ENCODE measurements at regions of chr6 and their contacts with region 1.

Region 1: GRCh38 chr6:139515511-139515910 is 141.1 kb upstream of the CITED2 start:
- DNase-seq: no peak
- H3K4me3 ChIP-seq: no peak overlapping the region
- H3K27ac ChIP-seq: no peak overlapping the region
- H3K4me1 ChIP-seq: peaks cover 23% of the 10 kb centered on the region
- H3K27me3 ChIP-seq: no peaks in the 10 kb centered on the region
- CTCF ChIP-seq: no peak

Region 2: GRCh38 chr6:139433631-139434419 is 81.7 kb before region 1 on chr6:
- CTCF ChIA-PET with region 1: no interaction called
- POLR2A ChIA-PET with region 1: no interaction called
- intact Hi-C with region 1: loop called (anchors 10 kb)
- DNase-seq: peak in 1 of 2 experiments; percentile 89
- H3K4me3 ChIP-seq: no peak overlapping the region
- H3K27ac ChIP-seq: peak overlapping the region; percentile 33
- H3K4me1 ChIP-seq: peaks cover 53% of the 10 kb centered on the region
- H3K27me3 ChIP-seq: no peaks in the 10 kb centered on the region
- CTCF ChIP-seq: no peak

Region 3: DNA sequence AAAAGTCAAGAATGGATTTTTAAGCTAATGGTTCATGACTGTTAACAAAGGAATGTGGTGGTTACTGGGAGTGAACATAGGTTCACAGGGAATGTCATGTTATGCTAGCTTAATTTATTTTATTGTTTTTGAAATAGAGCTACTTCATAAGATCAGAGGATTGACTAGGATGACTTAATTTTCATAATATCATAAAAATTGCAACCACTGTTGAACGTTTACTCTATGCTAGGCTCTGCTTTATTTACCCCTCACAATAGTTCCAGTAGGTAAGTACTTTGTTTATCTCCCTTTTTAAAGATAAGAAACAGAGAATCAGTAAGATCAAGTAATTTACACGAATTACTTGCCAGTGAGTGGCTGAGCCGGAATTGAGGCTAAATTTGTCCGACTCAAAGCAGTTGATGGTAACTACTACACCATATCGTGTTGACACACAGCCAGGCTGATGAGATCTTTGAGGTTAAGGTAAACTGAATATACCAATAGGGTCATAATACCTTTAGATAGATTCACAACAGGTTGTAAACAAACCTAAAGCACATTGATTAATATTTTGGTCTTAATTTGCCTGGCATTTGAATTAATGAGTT is 53.5 kb after region 1 on chr6:
- CTCF ChIA-PET with region 1: no interaction called
- POLR2A ChIA-PET with region 1: interaction called, 24 read pairs
- intact Hi-C with region 1: loop called (anchors 2 kb)
- DNase-seq: peak in 1 of 2 experiments; percentile 87
- H3K4me3 ChIP-seq: no peak overlapping the region; the same call in 1 of the 2 replicates
- H3K27ac ChIP-seq: peak overlapping the region; percentile 76
- H3K4me1 ChIP-seq: peaks cover 21% of the 10 kb centered on the region
- H3K27me3 ChIP-seq: no peaks in the 10 kb centered on the region
- CTCF ChIP-seq: no peak

Region 4: GRCh38 chr6:139699335-139699734 is 183.8 kb after region 1 on chr6:
- CTCF ChIA-PET with region 1: no interaction called
- POLR2A ChIA-PET with region 1: no interaction called
- intact Hi-C with region 1: loop called (anchors 5 kb)
- DNase-seq: no peak
- H3K4me3 ChIP-seq: no peak overlapping the region
- H3K27ac ChIP-seq: no peak overlapping the region
- H3K4me1 ChIP-seq: peaks cover 6% of the 10 kb centered on the region; the same call in 1 of the 2 replicates
- H3K27me3 ChIP-seq: no peaks in the 10 kb centered on the region
- CTCF ChIP-seq: no peak

Measured in PC-9 (cell line).